Body of pancreas (tissue), 4 donors: ENCODE measurements at regions of chr5 and their contacts with region 1.

Region 1: DNA sequence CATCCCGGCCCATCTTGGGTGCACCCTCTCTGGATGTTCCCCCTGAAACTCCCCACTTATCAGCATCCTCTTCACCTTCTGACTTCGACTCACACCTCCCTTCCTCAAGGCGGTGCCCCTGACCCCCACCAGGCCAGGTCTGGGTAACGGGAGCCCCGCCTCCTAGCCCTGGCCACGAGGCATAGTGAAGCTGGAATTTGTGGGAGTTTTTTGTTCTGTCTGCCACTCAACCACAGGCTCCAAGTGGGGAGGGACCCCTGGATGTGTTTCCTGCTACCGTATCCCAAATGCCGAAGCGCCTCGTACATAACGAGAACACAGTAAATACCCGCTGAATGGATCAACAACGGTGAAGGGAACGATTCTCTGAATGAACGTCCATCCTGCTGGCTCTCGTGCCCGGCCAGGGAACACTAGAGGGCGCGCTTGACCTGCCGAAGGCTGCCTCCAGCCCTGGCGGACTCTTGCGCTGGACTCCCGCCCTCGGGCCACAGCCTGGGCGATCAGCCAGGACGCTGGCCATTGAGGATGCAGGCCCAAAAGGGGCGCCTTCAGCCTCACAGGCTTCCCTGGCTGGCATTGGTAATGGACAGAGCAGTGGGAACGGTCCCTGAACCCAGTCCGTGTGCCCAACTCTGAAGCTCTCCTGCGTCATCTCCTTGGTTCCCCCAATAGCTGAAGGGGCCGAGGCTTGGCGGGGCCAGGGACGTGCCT is 47.3 kb upstream of the PHYKPL start:
- DNase-seq: peak; percentile 87 to 91 (median 89)
- ATAC-seq: peak; percentile 86
- H3K4me3 ChIP-seq: no peak overlapping the region
- H3K27ac ChIP-seq: no peak overlapping the region
- H3K4me1 ChIP-seq: peaks cover 4% of the 10 kb centered on the region
- H3K27me3 ChIP-seq: no peaks in the 10 kb centered on the region
- CTCF ChIP-seq: peak; percentile 85 to 95 (median 90)
- POLR2A ChIP-seq: no peak

Region 2: GRCh38 chr5:178182158-178182876 is 97.6 kb before region 1 on chr5:
- intact Hi-C with region 1: no loop called
- DNase-seq: no peak
- ATAC-seq: no peak
- H3K4me3 ChIP-seq: no peak overlapping the region
- H3K27ac ChIP-seq: no peak overlapping the region
- H3K4me1 ChIP-seq: no peaks in the 10 kb centered on the region
- H3K27me3 ChIP-seq: no peaks in the 10 kb centered on the region
- CTCF ChIP-seq: no peak
- POLR2A ChIP-seq: no peak

Region 3: DNA sequence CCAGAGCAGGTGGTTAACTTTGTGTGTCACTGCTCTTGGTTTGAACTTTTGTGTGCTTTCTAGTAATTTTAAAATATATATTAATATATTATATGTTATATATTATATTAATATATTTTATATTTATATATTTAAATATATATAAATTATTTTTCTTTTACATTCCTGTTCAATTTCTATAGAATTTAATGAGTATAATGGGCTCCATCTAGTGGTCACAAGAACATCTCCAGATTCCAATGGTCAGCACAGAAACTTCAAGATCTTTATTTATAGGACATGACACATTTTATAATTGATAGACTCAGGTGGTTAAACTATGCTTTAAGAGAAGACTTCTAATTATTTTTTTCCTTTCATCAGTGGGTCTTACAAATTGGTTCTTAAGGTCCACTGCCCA is 271.2 kb after region 1 on chr5:
- intact Hi-C with region 1: loop called (anchors 5 kb)
- DNase-seq: no peak
- ATAC-seq: no peak
- H3K4me3 ChIP-seq: no peak overlapping the region
- H3K27ac ChIP-seq: no peak overlapping the region
- H3K4me1 ChIP-seq: no peaks in the 10 kb centered on the region
- H3K27me3 ChIP-seq: no peaks in the 10 kb centered on the region
- CTCF ChIP-seq: peak; percentile 8 to 74 (median 45)
- POLR2A ChIP-seq: no peak

Region 4: GRCh38 chr5:178838695-178839685 is 559.1 kb after region 1 on chr5:
- intact Hi-C with region 1: loop called (anchors 10 kb)
- DNase-seq: peak; percentile 69 to 88 (median 86)
- ATAC-seq: peak; percentile 90
- H3K4me3 ChIP-seq: no peak overlapping the region
- H3K27ac ChIP-seq: no peak overlapping the region
- H3K4me1 ChIP-seq: no peaks in the 10 kb centered on the region
- H3K27me3 ChIP-seq: no peaks in the 10 kb centered on the region
- CTCF ChIP-seq: peak; percentile 51 to 90 (median 77)
- POLR2A ChIP-seq: no peak